K562 (cell line): ENCODE measurements at regions of chr20 and their contacts with region 1.

Region 1: DNA sequence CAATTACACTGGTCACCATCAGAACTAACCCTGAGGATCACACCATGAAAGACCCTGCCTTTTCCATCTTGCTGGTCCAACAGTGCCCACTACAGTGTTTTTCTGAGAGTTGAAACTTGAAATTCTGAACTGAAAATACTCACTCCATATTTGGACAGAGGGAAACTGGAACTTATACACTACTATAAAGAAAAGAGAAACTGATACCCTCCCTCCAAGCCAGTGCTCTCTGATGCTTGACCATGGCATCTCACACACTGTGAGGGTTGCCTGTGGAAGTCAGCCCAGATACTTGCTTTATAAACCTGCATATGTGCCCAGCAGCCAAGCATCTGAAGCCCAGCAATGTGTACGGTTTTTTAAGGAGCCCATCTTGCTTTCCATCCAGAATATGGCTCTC is 108.7 kb downstream of the FOXA2 start:
- DNase-seq: no peak
- ATAC-seq: no peak
- H3K4me3 ChIP-seq: no peak overlapping the region
- H3K27ac ChIP-seq: no peak overlapping the region
- H3K4me1 ChIP-seq: peaks cover 0 to 3% of the 10 kb centered on the region in 2 experiments; a peak in 2 of 5 replicates
- H3K27me3 ChIP-seq: no peaks in the 10 kb centered on the region
- CTCF ChIP-seq: no peak
- EP300 ChIP-seq: no peak
- POLR2A ChIP-seq: no peak
- RAD21 ChIP-seq: 0 out of 4 replicates have a peak, but pooled peaks of 1 of the 2 experiments have one; percentile 26

Region 2: GRCh38 chr20:22333885-22334545 is 141.6 kb before region 1 on chr20:
- CTCF ChIA-PET with region 1: no interaction called
- POLR2A ChIA-PET with region 1: no interaction called
- in situ Hi-C with region 1: no loop called
- intact Hi-C with region 1: loop called (anchors 10 kb)
- DNase-seq: peak; percentile 63 to 73 (median 72)
- ATAC-seq: peak; percentile 92
- H3K4me3 ChIP-seq: no peak overlapping the region
- H3K27ac ChIP-seq: no peak overlapping the region
- H3K4me1 ChIP-seq: no peaks in the 10 kb centered on the region
- H3K27me3 ChIP-seq: peaks cover 0 to 14% of the 10 kb centered on the region in 2 experiments; a peak in 3 of 5 replicates
- CTCF ChIP-seq: peak; percentile 65 to 80 (median 69); a peak in 5 of 6 replicates
- EP300 ChIP-seq: no peak
- POLR2A ChIP-seq: no peak
- RAD21 ChIP-seq: peak; percentile 53 to 75

Region 3: GRCh38 chr20:22385602-22386305 is 89.9 kb before region 1 on chr20:
- CTCF ChIA-PET with region 1: no interaction called
- POLR2A ChIA-PET with region 1: no interaction called
- in situ Hi-C with region 1: no loop called
- intact Hi-C with region 1: loop called (anchors 5 kb)
- DNase-seq: peak; percentile 10 to 55 (median 30)
- ATAC-seq: peak; percentile 94
- H3K4me3 ChIP-seq: no peak overlapping the region
- H3K27ac ChIP-seq: no peak overlapping the region
- H3K4me1 ChIP-seq: peaks cover 0 to 22% of the 10 kb centered on the region in 2 experiments; a peak in 2 of 5 replicates
- H3K27me3 ChIP-seq: no peaks in the 10 kb centered on the region
- CTCF ChIP-seq: peak; percentile 47 to 72 (median 54)
- EP300 ChIP-seq: no peak
- POLR2A ChIP-seq: no peak
- RAD21 ChIP-seq: peak; percentile 82 to 84